Calu3 (cell line): ENCODE measurements at regions of chr1 and their contacts with region 1.

Region 1: GRCh38 chr1:214602764-214603657 is at the start of gene CENPF:
- DNase-seq: peak; percentile 96
- H3K4me3 Mint-ChIP-seq: peak within 1 kb of the TSS; percentile 87
- H3K27ac Mint-ChIP-seq: peak within 1 kb of the TSS; percentile 85
- H3K4me1 Mint-ChIP-seq: peaks cover 26% of the 10 kb centered on the region
- H3K27me3 Mint-ChIP-seq: no peaks in the 10 kb centered on the region
- CTCF ChIP-seq: no peak
- total RNA-seq, gene CENPF: 118 and 144 TPM in 2 replicates

Region 2: DNA sequence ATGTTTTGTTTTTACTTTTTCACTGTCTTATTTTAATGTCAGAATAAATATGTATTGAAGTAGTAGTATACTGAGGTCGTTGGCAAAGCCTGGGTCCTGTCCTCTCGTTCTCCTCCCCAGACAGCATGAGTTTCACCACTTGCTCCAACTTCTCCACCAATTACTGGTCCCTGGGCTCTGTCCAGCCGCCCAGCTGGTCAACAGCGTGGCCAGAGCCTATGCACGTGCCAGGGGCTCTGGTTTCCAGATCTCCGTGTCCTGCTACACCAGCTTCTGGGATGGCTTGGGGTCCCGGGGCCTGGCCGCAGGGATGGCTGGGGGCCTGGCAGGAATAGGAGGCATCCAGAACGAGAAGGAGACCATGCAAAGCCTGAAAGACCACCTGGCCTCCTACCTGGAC is 70.9 kb before region 1 on chr1:
- CTCF ChIA-PET with region 1: no interaction called
- intact Hi-C with region 1: no loop called
- DNase-seq: no peak
- H3K4me3 Mint-ChIP-seq: no peak overlapping the region
- H3K27ac Mint-ChIP-seq: no peak overlapping the region
- H3K4me1 Mint-ChIP-seq: peaks cover 18% of the 10 kb centered on the region
- H3K27me3 Mint-ChIP-seq: no peaks in the 10 kb centered on the region
- CTCF ChIP-seq: no peak

Region 3: DNA sequence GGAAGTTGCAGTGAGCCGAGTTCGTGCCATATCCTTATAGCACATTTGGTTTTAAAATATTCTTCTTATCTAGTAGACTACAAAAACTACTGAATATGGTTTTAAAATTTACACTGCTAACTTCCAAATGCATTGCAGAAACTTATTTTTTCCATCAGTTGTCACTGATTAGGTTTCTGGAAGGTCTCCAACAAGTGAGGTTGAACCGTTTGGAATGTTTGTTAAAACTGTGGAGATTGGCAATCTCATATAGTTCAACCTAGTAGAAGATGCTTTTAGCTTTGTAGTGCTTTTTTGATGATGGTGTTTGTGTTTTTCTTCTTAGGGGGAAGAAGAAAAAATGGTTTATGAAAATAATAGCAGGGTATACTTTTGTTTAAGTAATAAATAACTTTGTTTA is 12.9 kb after region 1 on chr1:
- CTCF ChIA-PET with region 1: interaction called, 5 read pairs
- intact Hi-C with region 1: loop called (anchors 1 kb)
- DNase-seq: no peak
- H3K4me3 Mint-ChIP-seq: no peak overlapping the region
- H3K27ac Mint-ChIP-seq: no peak overlapping the region
- H3K4me1 Mint-ChIP-seq: peaks cover 48% of the 10 kb centered on the region
- H3K27me3 Mint-ChIP-seq: no peaks in the 10 kb centered on the region
- CTCF ChIP-seq: no peak

Region 4: GRCh38 chr1:214707306-214708087 is 104.5 kb after region 1 on chr1:
- CTCF ChIA-PET with region 1: no interaction called
- intact Hi-C with region 1: no loop called
- DNase-seq: no peak
- H3K4me3 Mint-ChIP-seq: no peak overlapping the region
- H3K27ac Mint-ChIP-seq: no peak overlapping the region
- H3K4me1 Mint-ChIP-seq: no peaks in the 10 kb centered on the region
- H3K27me3 Mint-ChIP-seq: no peaks in the 10 kb centered on the region
- CTCF ChIP-seq: no peak

Region 5: DNA sequence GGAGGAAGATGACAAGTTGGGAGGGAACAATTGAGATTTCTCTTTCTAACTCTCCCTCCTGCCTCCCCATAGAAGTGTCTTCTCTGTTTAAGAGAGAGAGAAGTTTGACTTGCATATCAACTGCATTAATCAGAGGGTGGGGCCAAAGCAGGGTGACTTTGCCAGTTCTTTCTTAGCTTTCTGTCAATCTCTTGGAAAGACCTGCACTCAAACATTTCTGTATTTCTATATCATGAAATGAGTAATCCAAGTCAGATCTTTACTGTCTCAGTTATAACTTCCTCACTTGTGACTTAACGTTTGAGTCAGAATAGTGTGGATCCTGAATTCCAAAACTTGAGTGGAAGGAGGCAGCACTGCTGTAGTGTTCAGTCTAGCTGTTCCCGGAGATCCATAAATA is 298.7 kb after region 1 on chr1:
- CTCF ChIA-PET with region 1: no interaction called
- intact Hi-C with region 1: no loop called
- DNase-seq: peak; percentile 28
- H3K4me3 Mint-ChIP-seq: no peak overlapping the region
- H3K27ac Mint-ChIP-seq: peak overlapping the region; percentile 27
- H3K4me1 Mint-ChIP-seq: peaks cover 26% of the 10 kb centered on the region
- H3K27me3 Mint-ChIP-seq: no peaks in the 10 kb centered on the region
- CTCF ChIP-seq: no peak